ENCODE measurements at regions of chr6 and their contacts with region 1.

Region 1: GRCh38 chr6:107033126-107033525 is 5.1 kb downstream of the MTRES1 start:
- DNase-seq: no peak
- ATAC-seq: no peak

Region 2: GRCh38 chr6:107114213-107114905 is 81.2 kb after region 1 on chr6:
- intact Hi-C with region 1: loop called (anchors 1 kb)
- DNase-seq: peak; percentile 93
- ATAC-seq: peak; percentile 98

Measured in Right ventricle myocardium inferior (tissue), 1 donor.